Astrocyte of the cerebellum (primary cell): ENCODE measurements at regions of chr12 and their contacts with region 1.

Region 1: DNA sequence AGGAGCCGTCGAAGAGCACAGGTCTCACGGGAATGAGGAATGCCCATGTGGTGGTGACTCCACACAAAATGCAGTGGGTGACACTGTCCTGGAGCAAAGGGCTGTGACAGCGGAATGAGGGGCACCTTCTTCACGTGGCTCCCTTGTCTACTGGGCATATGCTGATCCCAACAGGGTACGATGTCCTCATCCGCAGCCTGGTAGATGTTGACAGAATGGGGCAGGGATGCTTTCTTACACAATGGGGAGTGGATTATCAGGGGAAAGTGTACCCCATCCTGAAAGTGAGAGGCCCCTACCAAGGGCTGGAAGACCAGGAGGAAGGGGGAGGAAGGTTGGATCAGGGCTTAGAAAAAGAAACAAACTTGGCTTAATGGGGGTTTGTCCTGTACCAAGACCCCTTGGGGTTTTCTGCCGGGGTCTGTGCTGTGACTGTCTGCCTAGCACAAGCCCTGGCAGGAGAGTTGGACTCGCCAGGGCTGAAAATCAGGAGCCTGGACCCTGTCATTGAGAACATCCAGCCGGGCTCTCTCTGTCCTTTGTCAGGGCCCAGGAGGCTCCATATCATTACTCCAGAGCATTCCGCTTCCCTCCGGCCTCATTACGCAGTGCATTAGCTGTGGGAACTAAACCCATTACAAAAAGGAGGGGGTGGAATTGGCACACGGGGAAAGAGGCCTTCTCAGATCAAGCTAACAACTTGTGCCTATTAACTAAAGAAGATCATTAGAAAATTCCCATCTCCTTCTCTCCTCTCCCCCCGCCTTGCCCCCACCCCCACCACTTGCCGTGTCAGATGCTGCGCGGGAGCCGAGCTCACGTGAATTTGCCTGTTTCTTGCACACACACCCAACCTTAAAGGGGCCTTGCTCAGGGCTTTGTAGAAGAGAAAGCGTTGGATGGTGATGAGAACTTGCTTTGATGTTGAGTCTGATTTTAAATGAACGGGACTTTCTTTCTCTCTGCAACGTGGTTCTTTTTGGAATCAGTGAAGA is 171.8 kb upstream of the PARP11 start:
- DNase-seq: no peak
- H3K4me3 ChIP-seq: no peak overlapping the region
- CTCF ChIP-seq: no peak

Region 2: DNA sequence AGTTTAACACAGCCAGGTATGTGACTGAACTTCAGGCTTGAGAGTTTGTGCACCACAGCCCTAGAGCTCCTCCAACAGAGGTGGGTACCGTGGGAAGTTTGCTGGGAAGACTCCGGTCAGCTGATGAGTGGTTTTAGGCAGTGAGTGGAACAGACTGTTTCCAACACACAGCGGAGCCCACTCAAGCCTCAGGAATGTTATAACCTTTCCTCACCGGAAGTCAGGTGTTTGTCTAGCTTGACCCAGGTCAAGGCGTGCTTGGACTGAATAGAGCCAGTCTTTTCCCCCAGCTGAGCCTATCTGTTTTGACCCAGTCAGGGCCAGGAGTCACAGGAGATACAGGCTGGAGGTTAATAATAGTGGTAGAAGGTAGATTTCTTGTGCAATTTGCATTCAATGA is 33.4 kb before region 1 on chr12:
- in situ Hi-C with region 1: no loop called
- DNase-seq: no peak
- H3K4me3 ChIP-seq: no peak overlapping the region
- CTCF ChIP-seq: no peak

Region 3: DNA sequence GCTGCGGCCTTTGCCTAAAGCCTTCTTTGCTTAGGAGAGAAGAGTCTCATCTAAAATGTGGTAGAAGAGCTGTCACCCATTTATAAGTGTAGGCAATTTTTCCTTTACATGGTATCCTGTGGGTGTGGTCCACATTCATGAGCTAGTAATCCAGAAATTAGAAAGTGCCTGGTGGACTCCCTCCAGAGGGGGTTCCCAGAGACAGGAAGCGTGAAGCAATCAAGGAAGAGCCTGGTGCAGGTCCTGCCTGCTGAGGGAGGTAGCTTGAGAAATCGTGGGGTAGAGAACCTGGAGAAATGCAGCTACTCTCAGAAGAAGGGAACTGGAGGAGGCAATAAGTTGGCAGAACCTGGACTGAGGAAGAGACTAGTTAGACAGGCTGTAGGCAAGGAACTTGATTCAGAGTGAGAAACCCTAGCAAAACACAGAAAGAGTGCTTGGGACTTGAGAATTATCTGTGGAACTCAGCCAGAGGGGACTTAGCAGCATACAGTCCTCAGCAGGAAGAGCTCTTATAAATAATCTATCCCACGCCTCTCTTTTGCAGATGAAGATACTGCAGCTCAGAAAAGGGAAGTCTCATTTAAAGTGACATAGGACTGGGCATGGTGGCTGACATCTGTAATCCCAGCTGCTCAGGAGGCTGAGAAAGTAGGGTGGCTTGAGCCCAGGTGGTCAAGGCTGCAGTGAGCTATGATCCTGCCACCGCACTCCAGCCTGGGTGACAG is 46.1 kb after region 1 on chr12:
- in situ Hi-C with region 1: loop called (anchors 5 kb)
- DNase-seq: no peak
- H3K4me3 ChIP-seq: no peak overlapping the region
- CTCF ChIP-seq: no peak